ENCODE measurements at regions of chr17 and their contacts with region 1.

Region 1: DNA sequence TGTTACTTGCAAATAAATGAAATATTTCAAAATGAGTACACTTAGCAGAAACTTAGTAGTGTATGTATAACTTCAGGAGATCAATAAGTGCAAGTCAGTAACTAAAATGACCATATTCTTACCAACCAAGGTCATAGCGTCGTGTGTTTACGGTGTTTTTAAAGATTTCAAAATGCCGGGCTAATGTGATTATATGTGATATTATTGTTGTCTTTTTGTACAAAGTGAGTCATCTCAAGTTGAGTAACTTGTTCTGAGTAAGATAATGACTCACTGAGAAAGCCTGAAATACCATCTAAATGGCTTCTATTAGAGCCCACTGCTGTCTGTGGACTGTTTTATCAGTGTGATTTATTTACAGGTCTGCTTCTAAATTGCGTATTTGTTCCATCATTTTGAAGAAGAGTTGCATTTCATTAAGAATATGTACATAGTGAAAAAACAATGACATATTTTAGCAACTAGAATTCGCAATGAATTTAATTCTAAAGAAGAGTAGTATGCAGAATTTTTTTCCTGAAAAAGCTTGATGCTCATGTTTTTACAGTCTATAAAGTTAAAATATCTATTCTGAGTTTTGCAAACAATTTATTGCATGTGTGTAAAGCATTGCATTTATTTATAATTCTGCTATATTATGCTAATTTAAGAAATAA is 12.7 kb downstream of the KRT12 start:
- DNase-seq: peak; percentile 80
- H3K4me3 ChIP-seq: no peak overlapping the region
- CTCF ChIP-seq: no peak

Region 2: DNA sequence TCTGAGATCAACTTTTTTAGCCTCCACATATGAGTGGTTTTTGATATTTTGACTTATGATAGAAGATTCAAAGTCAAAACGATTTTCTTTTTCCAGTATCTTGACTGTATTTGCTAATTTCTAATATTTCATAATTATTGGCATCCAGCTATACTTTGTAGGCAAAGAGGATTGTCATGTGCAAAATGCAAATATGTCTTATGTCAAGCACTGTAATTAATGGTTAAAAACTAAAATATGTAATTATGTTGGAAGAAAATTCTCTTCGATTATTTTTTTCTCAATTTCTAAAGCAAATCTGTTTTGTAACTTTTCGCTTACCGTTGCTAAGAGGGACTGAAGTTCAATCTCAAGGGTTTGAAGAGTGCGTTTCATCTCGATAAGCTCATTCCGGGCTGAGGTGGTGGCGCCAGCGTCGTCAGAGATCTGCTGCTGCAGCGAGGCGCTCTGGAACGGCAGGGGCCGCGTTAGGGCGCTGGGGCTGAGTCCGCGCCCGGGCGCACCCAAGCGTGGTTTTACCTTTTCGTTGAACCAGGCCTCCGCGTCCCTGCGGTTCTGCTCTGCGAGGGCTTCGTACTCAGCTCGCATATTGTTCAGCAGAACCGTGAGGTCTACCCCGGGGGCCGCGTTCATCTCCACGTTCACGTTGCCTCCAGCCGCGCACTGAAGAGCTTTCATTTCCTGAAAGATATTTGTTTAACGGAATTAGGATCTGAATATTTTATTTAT is 74.9 kb before region 1 on chr17:
- CTCF ChIA-PET with region 1: no interaction called
- POLR2A ChIA-PET with region 1: no interaction called
- DNase-seq: no peak
- H3K4me3 ChIP-seq: peak overlapping the region; percentile 38
- CTCF ChIP-seq: no peak

Region 3: GRCh38 chr17:40818733-40819527 is 35.4 kb before region 1 on chr17:
- CTCF ChIA-PET with region 1: interaction called, 12 read pairs
- POLR2A ChIA-PET with region 1: no interaction called
- DNase-seq: no peak
- H3K4me3 ChIP-seq: peak overlapping the region; percentile 71
- CTCF ChIP-seq: no peak

Region 4: GRCh38 chr17:40903129-40904065 is 49.1 kb after region 1 on chr17:
- CTCF ChIA-PET with region 1: interaction called, 16 read pairs
- POLR2A ChIA-PET with region 1: no interaction called
- DNase-seq: no peak
- H3K4me3 ChIP-seq: peak overlapping the region; percentile 2
- CTCF ChIP-seq: no peak

Region 5: GRCh38 chr17:40926341-40926740 is 72.1 kb after region 1 on chr17:
- CTCF ChIA-PET with region 1: no interaction called
- POLR2A ChIA-PET with region 1: no interaction called
- DNase-seq: no peak
- H3K4me3 ChIP-seq: no peak overlapping the region
- CTCF ChIP-seq: no peak

Region 6: GRCh38 chr17:41322094-41322902 is 468.0 kb after region 1 on chr17:
- CTCF ChIA-PET with region 1: interaction called, 32 read pairs
- POLR2A ChIA-PET with region 1: no interaction called
- DNase-seq: peak; percentile 24
- H3K4me3 ChIP-seq: no peak overlapping the region
- CTCF ChIP-seq: peak; percentile 72

Region 7: DNA sequence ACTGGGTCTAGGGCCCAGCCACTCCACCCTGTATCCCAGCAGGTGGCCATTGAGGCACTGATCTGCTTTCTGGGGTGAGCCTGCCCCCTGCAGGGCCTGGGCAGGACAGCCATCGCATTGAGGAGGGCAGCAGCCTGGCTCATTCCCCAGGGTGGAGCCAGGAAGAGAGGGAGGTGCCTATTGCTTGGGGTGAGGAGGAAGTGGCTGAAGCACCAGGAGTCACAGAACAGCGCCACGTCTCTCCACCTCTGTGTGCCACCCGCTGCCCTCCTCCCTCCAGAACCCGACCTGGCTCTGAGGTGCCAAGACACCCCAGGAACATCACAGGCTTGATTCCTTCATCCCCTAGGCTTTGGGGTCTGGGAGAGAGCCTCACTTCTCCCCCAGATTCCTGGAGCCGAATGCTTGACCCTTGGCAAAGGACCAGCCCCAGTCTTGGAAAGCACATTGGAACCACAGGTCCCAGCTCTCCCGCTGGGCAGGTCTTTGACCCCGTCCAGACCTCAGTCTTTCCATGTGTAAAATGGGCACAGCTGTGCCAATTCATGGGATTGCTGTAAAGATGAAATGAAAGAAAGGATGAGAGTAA is 642.6 kb after region 1 on chr17:
- CTCF ChIA-PET with region 1: interaction called, 19 read pairs
- POLR2A ChIA-PET with region 1: no interaction called
- DNase-seq: peak; percentile 37
- H3K4me3 ChIP-seq: no peak overlapping the region
- CTCF ChIP-seq: peak; percentile 96

Measured in AG04449 (cell line).